Activated naive CD4-positive, alpha-beta T cell treated with anti-CD3 and anti-CD28 coated beads for 36 hours (primary cell): ENCODE measurements at regions of chr14 and their contacts with region 1.

Region 1: GRCh38 chr14:55373784-55374705 is 37.6 kb downstream of the ATG14 start:
- DNase-seq: peak; percentile 58
- H3K4me3 Mint-ChIP-seq: peak overlapping the region; percentile 45
- H3K27ac Mint-ChIP-seq: peak overlapping the region; percentile 97
- H3K4me1 Mint-ChIP-seq: peaks cover 43% of the 10 kb centered on the region
- H3K27me3 Mint-ChIP-seq: no peaks in the 10 kb centered on the region

Region 2: DNA sequence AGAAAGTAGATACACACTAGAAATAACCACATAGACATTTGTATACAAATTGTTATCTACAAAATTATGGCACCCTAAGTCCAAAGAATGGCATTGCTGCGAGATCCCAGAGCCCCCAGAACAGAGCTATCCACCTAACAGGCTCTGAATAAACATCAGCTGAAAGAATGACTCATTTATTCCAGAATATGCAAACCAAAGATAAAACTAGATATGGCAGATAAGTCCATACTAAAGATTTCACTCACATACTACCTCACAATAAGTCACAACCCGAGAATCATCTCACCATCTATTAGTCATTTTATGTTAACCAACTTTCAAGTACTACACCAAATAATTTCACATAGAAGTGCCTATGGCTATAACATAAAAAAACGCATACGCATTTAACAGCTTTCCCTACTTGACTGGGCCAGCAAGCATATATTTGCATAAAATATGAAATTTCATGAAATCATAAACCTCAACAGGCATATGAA is 938.5 kb before region 1 on chr14:
- CTCF ChIA-PET with region 1: no interaction called
- intact Hi-C with region 1: loop called (anchors 10 kb)
- DNase-seq: peak; percentile 16
- H3K4me3 Mint-ChIP-seq: peak overlapping the region; percentile 3
- H3K27ac Mint-ChIP-seq: peak overlapping the region; percentile 80
- H3K4me1 Mint-ChIP-seq: peaks cover 81% of the 10 kb centered on the region
- H3K27me3 Mint-ChIP-seq: no peaks in the 10 kb centered on the region

Region 3: GRCh38 chr14:55102141-55102621 is 271.9 kb before region 1 on chr14:
- CTCF ChIA-PET with region 1: no interaction called
- intact Hi-C with region 1: loop called (anchors 1 kb)
- DNase-seq: peak; percentile 70
- H3K4me3 Mint-ChIP-seq: no peak overlapping the region
- H3K27ac Mint-ChIP-seq: no peak overlapping the region
- H3K4me1 Mint-ChIP-seq: peaks cover 38% of the 10 kb centered on the region
- H3K27me3 Mint-ChIP-seq: no peaks in the 10 kb centered on the region

Region 4: GRCh38 chr14:55327179-55327578 is 46.9 kb before region 1 on chr14:
- CTCF ChIA-PET with region 1: interaction called, 6 read pairs
- intact Hi-C with region 1: loop called (anchors 1 kb)
- DNase-seq: peak; percentile 16
- H3K4me3 Mint-ChIP-seq: no peak overlapping the region
- H3K27ac Mint-ChIP-seq: peak overlapping the region; percentile 42
- H3K4me1 Mint-ChIP-seq: peaks cover 65% of the 10 kb centered on the region
- H3K27me3 Mint-ChIP-seq: no peaks in the 10 kb centered on the region

Region 5: DNA sequence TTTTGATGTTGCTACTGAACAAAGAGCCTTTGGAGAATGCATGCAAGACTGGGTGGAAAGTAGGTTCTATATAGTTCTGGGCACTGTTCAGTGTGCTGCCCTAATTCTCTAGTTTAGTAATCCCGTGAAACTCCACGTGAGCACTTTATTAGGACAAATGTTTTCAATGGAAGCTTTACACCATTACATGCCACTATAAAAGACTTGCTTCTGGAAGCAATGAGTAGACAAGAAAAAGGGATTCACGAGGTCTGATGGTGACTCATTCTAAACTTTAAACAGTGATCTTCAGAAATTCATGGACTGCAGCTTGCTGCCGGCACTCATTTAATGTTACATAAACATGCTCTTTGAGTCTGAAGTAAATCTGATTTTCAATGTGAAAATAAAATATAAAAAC is 15.3 kb after region 1 on chr14:
- CTCF ChIA-PET with region 1: interaction called, 8 read pairs
- intact Hi-C with region 1: loop called (anchors 1 kb)
- DNase-seq: no peak
- H3K4me3 Mint-ChIP-seq: no peak overlapping the region
- H3K27ac Mint-ChIP-seq: no peak overlapping the region
- H3K4me1 Mint-ChIP-seq: peaks cover 52% of the 10 kb centered on the region
- H3K27me3 Mint-ChIP-seq: no peaks in the 10 kb centered on the region

Region 6: DNA sequence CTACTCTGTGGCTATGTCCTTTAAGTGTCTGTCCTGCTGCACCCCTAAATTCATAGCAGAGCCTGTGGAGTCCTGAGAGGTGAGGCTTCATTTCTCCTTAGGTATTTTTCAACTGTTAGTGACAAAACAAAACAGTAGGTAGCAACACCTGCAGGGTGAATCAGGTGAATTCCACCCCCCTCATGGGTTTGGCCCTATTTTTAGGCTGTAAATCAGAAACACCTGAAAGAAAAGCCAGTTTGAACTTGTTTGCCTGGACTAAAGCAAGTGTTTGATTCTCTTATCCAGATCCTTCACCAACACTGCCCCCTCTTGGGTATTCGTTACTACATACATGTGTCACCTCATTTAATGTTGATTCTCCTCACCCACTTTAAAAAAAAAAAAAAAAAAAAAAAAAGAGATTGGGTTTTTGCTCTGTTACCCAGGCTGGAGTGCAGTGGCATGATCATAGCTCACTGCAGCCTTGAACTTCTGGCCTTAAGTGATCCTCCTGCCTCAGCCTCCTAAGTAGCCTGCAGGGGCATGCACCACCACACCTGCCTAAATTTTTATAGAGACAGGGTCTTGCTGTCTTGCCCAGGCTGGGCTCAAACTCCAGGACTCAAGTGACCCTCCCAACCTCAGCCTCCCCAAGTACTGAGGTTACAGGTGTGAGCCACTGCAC is 56.1 kb after region 1 on chr14:
- CTCF ChIA-PET with region 1: interaction called, 3 read pairs
- intact Hi-C with region 1: loop called (anchors 1 kb)
- DNase-seq: peak; percentile 71
- H3K4me3 Mint-ChIP-seq: no peak overlapping the region
- H3K27ac Mint-ChIP-seq: peak overlapping the region; percentile 62
- H3K4me1 Mint-ChIP-seq: peaks cover 29% of the 10 kb centered on the region
- H3K27me3 Mint-ChIP-seq: no peaks in the 10 kb centered on the region